ENCODE measurements at regions of chr14 and their contacts with region 1.

Region 1: GRCh38 chr14:102591889-102592763 is at the start of gene RCOR1:
- DNase-seq: peak; percentile 97 to 99 (median 98)
- H3K4me3 ChIP-seq: peak within 1 kb of the TSS; percentile 52 to 86
- H3K4me3 Mint-ChIP-seq: peak within 1 kb of the TSS; percentile 90 to 97 (median 94)
- H3K27ac ChIP-seq: peak within 1 kb of the TSS; percentile 77
- H3K27ac Mint-ChIP-seq: peak within 1 kb of the TSS; percentile 93 to 98 (median 96)
- H3K4me1 ChIP-seq: peaks cover 25% of the 10 kb centered on the region
- H3K4me1 Mint-ChIP-seq: peaks cover 13 to 28% (median 22%) of the 10 kb centered on the region in 4 donors
- H3K27me3 ChIP-seq: no peaks in the 10 kb centered on the region
- H3K27me3 Mint-ChIP-seq: no peaks in the 10 kb centered on the region
- total RNA-seq, gene RCOR1: 19.4 to 21.5 TPM

Region 2: GRCh38 chr14:102255401-102256190 is 336.5 kb before region 1 on chr14:
- CTCF ChIA-PET with region 1: no interaction called
- POLR2A ChIA-PET with region 1: no interaction called
- intact Hi-C with region 1: no loop called
- DNase-seq: no peak
- H3K4me3 ChIP-seq: no peak overlapping the region
- H3K4me3 Mint-ChIP-seq: no peak overlapping the region
- H3K27ac ChIP-seq: no peak overlapping the region
- H3K27ac Mint-ChIP-seq: no peak overlapping the region
- H3K4me1 ChIP-seq: no peaks in the 10 kb centered on the region
- H3K4me1 Mint-ChIP-seq: no peaks in the 10 kb centered on the region
- H3K27me3 ChIP-seq: no peaks in the 10 kb centered on the region
- H3K27me3 Mint-ChIP-seq: peaks cover 0 to 4% of the 10 kb centered on the region in 2 donors

Region 3: DNA sequence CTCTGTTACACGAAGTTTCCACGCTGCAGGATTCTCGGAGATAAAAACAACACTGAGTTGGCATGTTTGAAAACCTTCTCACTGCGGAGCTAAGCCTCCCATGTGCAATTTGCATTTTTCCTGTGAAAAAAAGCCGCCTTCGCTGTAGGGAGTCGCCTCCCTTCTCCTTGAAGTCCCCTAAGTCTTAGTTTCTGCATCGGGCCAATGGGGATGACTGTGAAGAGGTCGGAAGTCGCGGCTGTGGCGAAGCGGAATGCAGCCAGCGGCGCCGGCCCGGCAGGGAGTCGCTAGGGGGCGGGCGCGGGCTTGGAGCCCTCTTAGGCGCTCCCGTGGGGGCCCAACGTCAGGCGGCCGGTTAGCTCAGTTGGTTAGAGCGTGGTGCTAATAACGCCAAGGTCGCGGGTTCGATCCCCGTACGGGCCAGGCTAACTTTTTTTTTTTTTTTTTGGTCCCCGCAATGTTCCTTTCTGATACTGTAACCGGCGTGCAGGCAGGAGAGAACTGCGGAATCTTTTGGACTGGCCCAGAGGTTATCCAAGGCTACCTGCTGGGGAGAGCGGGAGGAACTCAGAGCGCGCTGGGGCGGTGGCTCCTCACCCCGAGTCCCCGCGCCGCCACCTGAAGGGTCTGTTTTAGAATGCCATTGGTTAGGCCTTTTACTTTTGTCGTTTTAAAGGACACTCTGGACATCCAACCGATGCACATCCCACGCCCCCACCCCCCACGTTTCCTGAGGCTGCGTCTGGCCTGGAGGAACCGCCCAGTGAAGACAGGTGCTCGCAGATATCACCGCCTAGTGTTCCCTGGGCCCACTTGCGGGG is 275.2 kb before region 1 on chr14:
- CTCF ChIA-PET with region 1: no interaction called
- POLR2A ChIA-PET with region 1: interaction called, 3 read pairs
- intact Hi-C with region 1: loop called (anchors 5 kb)
- DNase-seq: peak; percentile 90 to 98 (median 95)
- H3K4me3 ChIP-seq: peak overlapping the region; percentile 59 to 76
- H3K4me3 Mint-ChIP-seq: peak overlapping the region; percentile 92 to 99 (median 96)
- H3K27ac ChIP-seq: peak overlapping the region; percentile 52
- H3K27ac Mint-ChIP-seq: peak overlapping the region; percentile 75 to 100 (median 96)
- H3K4me1 ChIP-seq: peaks cover 57% of the 10 kb centered on the region
- H3K4me1 Mint-ChIP-seq: peaks cover 30 to 77% (median 49%) of the 10 kb centered on the region in 4 donors
- H3K27me3 ChIP-seq: no peaks in the 10 kb centered on the region
- H3K27me3 Mint-ChIP-seq: peaks cover 4 to 9% of the 10 kb centered on the region in 2 donors

Region 4: GRCh38 chr14:102524466-102525218 is 67.5 kb before region 1 on chr14:
- CTCF ChIA-PET with region 1: interaction called, 17 read pairs
- POLR2A ChIA-PET with region 1: interaction called, 9 read pairs
- intact Hi-C with region 1: loop called (anchors 1 kb)
- DNase-seq: peak; percentile 84 to 91 (median 87)
- H3K4me3 ChIP-seq: peak overlapping the region; percentile 59 to 87
- H3K4me3 Mint-ChIP-seq: peak overlapping the region; percentile 80 to 93 (median 89)
- H3K27ac ChIP-seq: peak overlapping the region; percentile 48
- H3K27ac Mint-ChIP-seq: peak overlapping the region; percentile 70 to 95 (median 90)
- H3K4me1 ChIP-seq: peaks cover 22% of the 10 kb centered on the region
- H3K4me1 Mint-ChIP-seq: peaks cover 14 to 31% (median 24%) of the 10 kb centered on the region in 4 donors
- H3K27me3 ChIP-seq: no peaks in the 10 kb centered on the region
- H3K27me3 Mint-ChIP-seq: no peaks in the 10 kb centered on the region

Region 5: DNA sequence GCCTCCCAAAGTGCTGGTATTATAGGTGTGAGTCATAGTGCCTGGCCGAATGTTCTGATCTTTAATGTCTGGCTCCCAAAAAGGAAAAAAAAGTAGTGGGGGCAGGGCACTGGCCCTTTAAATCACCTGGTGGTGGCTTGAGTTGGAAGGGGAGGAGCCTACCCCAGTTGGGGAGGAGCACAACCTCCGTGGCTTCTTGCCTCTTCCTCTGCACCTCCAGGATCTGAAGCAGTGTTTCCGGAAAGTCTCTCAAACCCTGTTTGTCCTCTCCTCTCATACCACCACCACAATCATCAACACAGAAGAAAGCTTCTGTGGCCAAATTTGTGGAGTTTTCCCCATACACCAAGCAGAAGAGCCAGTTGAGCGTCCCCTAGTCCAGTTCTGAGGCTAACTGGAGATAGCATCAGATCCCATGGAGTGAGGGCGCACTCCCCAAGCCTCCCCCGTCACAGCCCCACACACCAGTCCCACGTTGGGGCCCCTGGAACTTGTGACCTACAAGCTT is 24.0 kb before region 1 on chr14:
- CTCF ChIA-PET with region 1: interaction called, 13 read pairs
- POLR2A ChIA-PET with region 1: interaction called, 10 read pairs
- intact Hi-C with region 1: loop called (anchors 2 kb)
- DNase-seq: peak in 4 of 5 donors; percentile 17 to 44 (median 34)
- H3K4me3 ChIP-seq: peak overlapping the region in 1 of 2 donors; percentile 42
- H3K4me3 Mint-ChIP-seq: peak overlapping the region; percentile 36 to 89 (median 74)
- H3K27ac ChIP-seq: no peak overlapping the region
- H3K27ac Mint-ChIP-seq: peak overlapping the region; percentile 45 to 91 (median 78)
- H3K4me1 ChIP-seq: peaks cover 13% of the 10 kb centered on the region
- H3K4me1 Mint-ChIP-seq: peaks cover 3 to 17% (median 9%) of the 10 kb centered on the region in 4 donors
- H3K27me3 ChIP-seq: no peaks in the 10 kb centered on the region
- H3K27me3 Mint-ChIP-seq: no peaks in the 10 kb centered on the region

Region 6: GRCh38 chr14:102608064-102608446 is 15.9 kb after region 1 on chr14:
- CTCF ChIA-PET with region 1: interaction called, 21 read pairs
- POLR2A ChIA-PET with region 1: interaction called, 3 read pairs
- intact Hi-C with region 1: no loop called
- DNase-seq: no peak
- H3K4me3 ChIP-seq: no peak overlapping the region
- H3K4me3 Mint-ChIP-seq: peak overlapping the region in 1 of 8 donors; percentile 48
- H3K27ac ChIP-seq: no peak overlapping the region
- H3K27ac Mint-ChIP-seq: no peak overlapping the region
- H3K4me1 ChIP-seq: peaks cover 10% of the 10 kb centered on the region
- H3K4me1 Mint-ChIP-seq: peaks cover 25 to 55% (median 35%) of the 10 kb centered on the region in 4 donors
- H3K27me3 ChIP-seq: no peaks in the 10 kb centered on the region
- H3K27me3 Mint-ChIP-seq: no peaks in the 10 kb centered on the region

Region 7: DNA sequence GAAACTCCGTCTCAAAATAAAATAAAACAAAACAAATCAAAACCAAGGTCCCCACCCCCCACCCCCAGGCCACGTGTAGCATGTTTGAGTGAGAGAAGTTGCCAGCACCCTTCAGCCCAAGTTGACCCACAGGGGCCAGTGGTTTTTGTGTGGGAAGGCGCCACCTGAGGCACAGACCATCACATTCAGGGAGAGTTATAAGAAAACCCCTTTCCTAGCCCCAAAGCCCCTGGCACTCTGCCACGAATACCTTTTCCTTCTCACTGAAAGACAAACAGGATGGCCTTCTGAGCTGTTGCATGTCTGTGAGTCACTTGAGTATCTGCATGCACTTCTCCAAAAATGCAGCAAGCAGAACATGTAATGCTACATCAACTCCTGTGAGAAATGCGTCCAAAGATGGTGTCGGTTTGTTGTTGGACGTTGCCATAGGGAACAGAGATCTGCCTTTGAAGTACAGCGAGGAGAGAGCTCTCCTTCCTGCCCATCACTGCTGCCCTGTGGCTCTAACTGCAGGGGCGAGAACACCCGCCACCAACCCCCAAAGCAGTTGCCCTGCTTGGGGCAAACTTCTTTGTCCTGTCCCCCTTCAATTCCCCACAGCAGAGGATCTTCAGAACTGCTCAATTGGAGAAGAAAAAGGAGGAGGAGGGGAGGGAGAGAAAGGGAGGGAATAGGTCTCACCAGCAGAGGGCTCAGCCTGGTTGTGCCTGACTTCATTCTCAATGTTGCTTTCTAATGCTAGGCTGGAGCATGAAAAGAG is 182.4 kb after region 1 on chr14:
- CTCF ChIA-PET with region 1: no interaction called
- POLR2A ChIA-PET with region 1: no interaction called
- intact Hi-C with region 1: loop called (anchors 5 kb)
- DNase-seq: peak; percentile 77 to 92 (median 82)
- H3K4me3 ChIP-seq: no peak overlapping the region
- H3K4me3 Mint-ChIP-seq: peak overlapping the region; percentile 28 to 82 (median 69)
- H3K27ac ChIP-seq: peak overlapping the region; percentile 64
- H3K27ac Mint-ChIP-seq: peak overlapping the region; percentile 92 to 98 (median 96)
- H3K4me1 ChIP-seq: peaks cover 35% of the 10 kb centered on the region
- H3K4me1 Mint-ChIP-seq: peaks cover 22 to 49% (median 31%) of the 10 kb centered on the region in 4 donors
- H3K27me3 ChIP-seq: no peaks in the 10 kb centered on the region
- H3K27me3 Mint-ChIP-seq: peaks cover 0 to 3% of the 10 kb centered on the region in 2 donors

Region 8: DNA sequence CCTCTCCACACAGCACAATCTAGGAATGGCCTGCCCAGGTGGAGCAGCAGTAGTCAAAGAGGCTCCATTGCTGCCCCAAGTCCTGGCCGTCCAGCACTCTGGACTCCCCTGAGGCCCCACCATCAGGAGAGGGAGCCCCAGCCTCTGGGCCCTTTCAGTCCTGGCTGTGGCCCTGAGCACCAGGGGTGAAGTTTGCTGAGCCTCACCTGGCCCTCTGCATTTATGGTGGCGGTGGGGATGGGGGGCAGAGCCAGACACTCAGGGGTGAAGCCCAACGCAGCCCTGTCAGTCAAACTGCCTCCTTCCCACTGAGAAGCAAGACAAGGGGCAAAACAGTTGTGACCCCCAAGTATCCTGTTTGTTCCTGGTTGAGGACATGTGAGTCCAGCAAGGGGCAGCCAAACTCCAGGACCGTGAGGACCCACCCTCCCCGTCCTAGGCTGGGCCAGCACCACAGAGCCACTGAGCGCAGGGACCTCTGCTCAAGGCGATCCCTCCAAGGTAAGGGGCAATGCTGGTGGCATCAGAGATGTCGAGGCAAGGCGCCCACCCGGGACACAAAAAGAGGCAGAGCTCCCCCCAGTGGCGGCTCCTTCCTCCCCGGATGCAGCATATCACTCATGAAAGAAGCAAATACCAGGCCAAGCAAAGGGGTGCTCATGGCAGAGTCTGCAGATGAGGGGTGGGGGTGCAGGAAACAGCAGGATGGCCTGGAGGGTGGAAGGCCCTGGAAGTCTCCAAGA is 325.5 kb after region 1 on chr14:
- CTCF ChIA-PET with region 1: no interaction called
- POLR2A ChIA-PET with region 1: no interaction called
- intact Hi-C with region 1: no loop called
- DNase-seq: peak in 4 of 5 donors; percentile 34 to 46 (median 43)
- H3K4me3 ChIP-seq: no peak overlapping the region
- H3K4me3 Mint-ChIP-seq: no peak overlapping the region
- H3K27ac ChIP-seq: no peak overlapping the region
- H3K27ac Mint-ChIP-seq: peak overlapping the region in 3 of 7 donors; percentile 2 to 87 (median 10)
- H3K4me1 ChIP-seq: no peaks in the 10 kb centered on the region
- H3K4me1 Mint-ChIP-seq: peaks cover 0 to 1% (median 0%) of the 10 kb centered on the region in 4 donors
- H3K27me3 ChIP-seq: no peaks in the 10 kb centered on the region
- H3K27me3 Mint-ChIP-seq: no peaks in the 10 kb centered on the region